ENCODE measurements at regions of chr9 and their contacts with region 1.

Region 1: GRCh38 chr9:532707-533106 is 308.8 kb upstream of the DMRT1 start:
- DNase-seq: no peak
- H3K4me3 Mint-ChIP-seq: no peak overlapping the region
- H3K27ac Mint-ChIP-seq: no peak overlapping the region
- H3K4me1 Mint-ChIP-seq: no peaks in the 10 kb centered on the region
- H3K27me3 Mint-ChIP-seq: no peaks in the 10 kb centered on the region
- CTCF ChIP-seq: no peak

Region 2: DNA sequence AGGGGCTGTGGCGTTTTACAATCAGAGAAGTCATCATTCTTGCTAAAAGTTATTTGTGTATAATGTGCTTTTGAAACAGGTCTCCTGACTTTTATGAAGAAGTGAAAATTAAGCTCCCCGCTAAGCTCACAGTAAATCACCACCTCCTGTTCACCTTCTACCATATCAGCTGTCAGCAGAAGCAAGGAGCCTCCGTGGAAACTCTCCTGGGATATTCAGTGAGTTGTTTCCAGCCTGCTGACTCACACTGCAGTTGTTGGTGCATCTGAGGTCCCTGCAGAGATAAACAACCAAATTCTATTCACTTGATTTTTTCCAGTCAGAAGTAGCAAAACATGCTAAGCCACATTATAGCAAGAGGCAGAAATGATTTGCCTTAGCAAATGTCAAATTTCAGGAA is 161.4 kb before region 1 on chr9:
- CTCF ChIA-PET with region 1: interaction called, 20 read pairs
- intact Hi-C with region 1: no loop called
- DNase-seq: no peak
- H3K4me3 Mint-ChIP-seq: no peak overlapping the region
- H3K27ac Mint-ChIP-seq: no peak overlapping the region
- H3K4me1 Mint-ChIP-seq: no peaks in the 10 kb centered on the region
- H3K27me3 Mint-ChIP-seq: peaks cover under 1% of the 10 kb centered on the region
- CTCF ChIP-seq: no peak

Measured in Calu3 (cell line).